ENCODE measurements at regions of chr1 and their contacts with region 1.

Region 1: DNA sequence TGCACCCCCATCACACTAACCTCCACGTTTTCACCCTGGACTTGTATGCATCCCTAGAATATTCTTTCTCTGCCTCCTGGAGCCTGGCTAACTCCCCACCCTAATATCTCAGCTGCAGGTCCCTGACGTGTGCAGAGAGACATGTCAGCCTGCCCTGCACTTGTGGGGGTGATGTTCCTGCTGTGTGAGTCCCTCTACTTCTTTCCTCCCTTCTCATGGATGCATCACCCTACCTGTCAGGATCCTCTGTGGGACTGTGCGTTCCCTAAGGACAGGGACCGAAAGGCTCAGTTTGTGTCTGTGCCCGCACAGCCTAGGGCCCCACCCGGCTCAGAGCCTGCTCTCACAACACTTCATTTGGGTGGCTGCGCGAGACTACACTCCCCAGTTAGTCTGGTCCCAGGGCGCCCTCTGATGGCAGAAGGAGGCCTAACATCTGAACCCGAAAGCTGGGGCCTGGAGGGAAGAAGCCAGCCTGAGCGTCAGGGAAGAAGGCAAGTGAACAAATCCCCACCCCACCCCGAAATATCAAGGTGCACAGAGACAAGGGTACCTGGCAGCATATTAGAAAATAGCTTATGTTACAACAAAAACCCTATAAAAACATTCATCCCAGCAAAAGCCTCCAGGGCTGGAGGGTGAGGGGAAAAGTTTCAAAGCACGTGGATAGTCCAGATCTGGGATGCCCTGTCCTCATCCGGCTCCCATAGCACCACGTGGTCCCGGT is 3.7 kb downstream of the CD52 start:
- DNase-seq: peak; percentile 97
- ATAC-seq: peak; percentile 62
- H3K4me3 Mint-ChIP-seq: peak overlapping the region; percentile 59
- H3K27ac Mint-ChIP-seq: peak overlapping the region; percentile 96
- H3K4me1 Mint-ChIP-seq: peaks cover 51% of the 10 kb centered on the region
- H3K27me3 Mint-ChIP-seq: no peaks in the 10 kb centered on the region

Region 2: GRCh38 chr1:26035959-26036755 is 285.3 kb before region 1 on chr1:
- CTCF ChIA-PET with region 1: interaction called, 4 read pairs
- POLR2A ChIA-PET with region 1: interaction called, 4 read pairs
- intact Hi-C with region 1: loop called in 1 of 2 experiments (anchors 5 kb)
- DNase-seq: peak; percentile 86
- ATAC-seq: peak; percentile 76
- H3K4me3 Mint-ChIP-seq: peak overlapping the region; percentile 80
- H3K27ac Mint-ChIP-seq: peak overlapping the region; percentile 78
- H3K4me1 Mint-ChIP-seq: peaks cover 13% of the 10 kb centered on the region
- H3K27me3 Mint-ChIP-seq: peaks cover 6% of the 10 kb centered on the region

Region 3: GRCh38 chr1:26169669-26170471 is 151.6 kb before region 1 on chr1 and contains the start of gene ZNF593:
- CTCF ChIA-PET with region 1: interaction called, 9 read pairs
- POLR2A ChIA-PET with region 1: no interaction called
- intact Hi-C with region 1: loop called in 1 of 2 experiments (anchors 1 kb)
- DNase-seq: peak; percentile 94
- ATAC-seq: peak; percentile 96
- H3K4me3 Mint-ChIP-seq: peak within 1 kb of the TSS; percentile 95
- H3K27ac Mint-ChIP-seq: peak within 1 kb of the TSS; percentile 88
- H3K4me1 Mint-ChIP-seq: peaks cover 10% of the 10 kb centered on the region
- H3K27me3 Mint-ChIP-seq: no peaks in the 10 kb centered on the region
- total RNA-seq, gene ZNF593: 44.6 to 56.3 TPM

Region 4: GRCh38 chr1:26284597-26285360 is 36.7 kb before region 1 on chr1:
- CTCF ChIA-PET with region 1: interaction called, 399 read pairs
- POLR2A ChIA-PET with region 1: interaction called, 16 read pairs
- intact Hi-C with region 1: loop called (anchors 1 kb)
- DNase-seq: peak; percentile 99
- ATAC-seq: peak; percentile 66
- H3K4me3 Mint-ChIP-seq: peak overlapping the region; percentile 61
- H3K27ac Mint-ChIP-seq: peak overlapping the region; percentile 99
- H3K4me1 Mint-ChIP-seq: peaks cover 87% of the 10 kb centered on the region
- H3K27me3 Mint-ChIP-seq: no peaks in the 10 kb centered on the region

Region 5: DNA sequence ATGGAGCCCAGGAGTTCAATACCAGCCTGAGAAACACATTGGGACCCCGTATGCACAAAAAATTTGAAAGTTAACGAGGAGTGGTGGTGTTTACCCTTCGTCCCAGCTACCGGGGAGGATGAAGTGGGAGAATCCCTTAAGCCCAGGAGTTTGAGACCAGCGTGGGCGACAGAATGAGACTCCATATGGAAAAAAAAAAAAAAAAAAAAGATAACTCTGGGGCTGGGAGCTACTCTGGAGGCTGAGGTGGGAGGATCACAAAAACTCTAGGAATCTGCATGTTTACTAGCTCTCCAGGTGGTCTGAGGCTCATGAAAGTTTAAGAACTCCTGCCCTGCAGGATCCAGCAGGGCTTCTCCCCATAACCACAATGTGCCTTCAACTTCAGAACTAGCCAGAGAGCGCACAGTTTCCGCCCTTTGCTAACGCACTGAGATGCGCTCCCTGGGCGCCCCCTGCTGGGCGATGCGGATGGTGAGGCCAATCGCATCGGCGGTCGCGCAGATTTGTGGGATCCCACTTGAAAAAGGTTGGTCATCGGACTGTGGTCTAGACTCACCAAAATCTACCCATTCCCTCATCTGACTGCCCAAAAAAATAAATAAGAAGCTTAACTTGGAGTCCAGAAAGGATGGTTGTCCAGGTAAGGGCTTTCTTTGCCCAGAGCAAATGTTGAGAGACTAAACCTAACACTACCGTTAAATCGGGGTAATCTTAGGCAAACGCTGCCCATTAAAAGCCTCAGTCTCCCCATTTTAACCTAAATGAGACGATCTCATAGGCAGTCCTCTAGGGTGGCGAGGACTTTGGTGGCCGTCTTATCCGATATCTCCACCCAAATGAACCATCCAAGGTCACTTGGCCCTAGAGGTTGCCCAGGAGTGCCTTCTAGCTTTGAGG is 42.3 kb after region 1 on chr1:
- CTCF ChIA-PET with region 1: interaction called, 7 read pairs
- POLR2A ChIA-PET with region 1: interaction called, 3 read pairs
- intact Hi-C with region 1: loop called in 1 of 2 experiments (anchors 2 kb)
- DNase-seq: peak; percentile 92
- ATAC-seq: peak; percentile 77
- H3K4me3 Mint-ChIP-seq: no peak overlapping the region
- H3K27ac Mint-ChIP-seq: no peak overlapping the region
- H3K4me1 Mint-ChIP-seq: peaks cover 28% of the 10 kb centered on the region
- H3K27me3 Mint-ChIP-seq: peaks cover 11% of the 10 kb centered on the region

Region 6: GRCh38 chr1:26472901-26473845 is 151.7 kb after region 1 on chr1:
- CTCF ChIA-PET with region 1: no interaction called
- POLR2A ChIA-PET with region 1: interaction called, 3 read pairs
- intact Hi-C with region 1: loop called in 1 of 2 experiments (anchors 2 kb)
- DNase-seq: peak; percentile 97
- ATAC-seq: peak; percentile 62
- H3K4me3 Mint-ChIP-seq: peak overlapping the region; percentile 91
- H3K27ac Mint-ChIP-seq: peak overlapping the region; percentile 43
- H3K4me1 Mint-ChIP-seq: peaks cover 50% of the 10 kb centered on the region
- H3K27me3 Mint-ChIP-seq: no peaks in the 10 kb centered on the region

Region 7: DNA sequence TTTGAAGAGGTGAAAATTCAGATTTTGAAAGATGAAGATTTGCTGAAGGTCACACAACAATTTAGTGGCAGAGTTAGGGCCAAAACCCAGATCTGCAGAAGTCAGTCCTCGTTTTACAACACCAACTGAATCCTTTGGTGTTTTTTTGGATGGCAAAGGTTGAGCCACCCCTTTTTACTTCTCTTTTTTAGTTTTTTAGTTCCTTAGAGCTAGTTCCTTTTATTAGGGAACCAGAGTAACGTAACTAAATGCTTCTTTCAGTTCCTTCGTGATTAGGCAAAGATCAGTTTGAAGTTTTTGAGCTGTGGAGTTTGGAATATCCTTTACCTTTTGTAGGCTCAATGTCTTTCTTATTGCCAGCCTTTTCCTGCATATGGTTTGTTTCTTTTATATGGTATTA is 306.5 kb after region 1 on chr1:
- CTCF ChIA-PET with region 1: no interaction called
- POLR2A ChIA-PET with region 1: no interaction called
- intact Hi-C with region 1: no loop called
- DNase-seq: no peak
- ATAC-seq: no peak
- H3K4me3 Mint-ChIP-seq: no peak overlapping the region
- H3K27ac Mint-ChIP-seq: no peak overlapping the region
- H3K4me1 Mint-ChIP-seq: no peaks in the 10 kb centered on the region
- H3K27me3 Mint-ChIP-seq: no peaks in the 10 kb centered on the region

Measured in activated CD4-positive, alpha-beta T cell treated with anti-CD3 and anti-CD28 coated beads for 36 hours (primary cell).